Dorsolateral prefrontal cortex (tissue), 120 donors: ENCODE measurements at regions of chr10 and their contacts with region 1.

Region 1: DNA sequence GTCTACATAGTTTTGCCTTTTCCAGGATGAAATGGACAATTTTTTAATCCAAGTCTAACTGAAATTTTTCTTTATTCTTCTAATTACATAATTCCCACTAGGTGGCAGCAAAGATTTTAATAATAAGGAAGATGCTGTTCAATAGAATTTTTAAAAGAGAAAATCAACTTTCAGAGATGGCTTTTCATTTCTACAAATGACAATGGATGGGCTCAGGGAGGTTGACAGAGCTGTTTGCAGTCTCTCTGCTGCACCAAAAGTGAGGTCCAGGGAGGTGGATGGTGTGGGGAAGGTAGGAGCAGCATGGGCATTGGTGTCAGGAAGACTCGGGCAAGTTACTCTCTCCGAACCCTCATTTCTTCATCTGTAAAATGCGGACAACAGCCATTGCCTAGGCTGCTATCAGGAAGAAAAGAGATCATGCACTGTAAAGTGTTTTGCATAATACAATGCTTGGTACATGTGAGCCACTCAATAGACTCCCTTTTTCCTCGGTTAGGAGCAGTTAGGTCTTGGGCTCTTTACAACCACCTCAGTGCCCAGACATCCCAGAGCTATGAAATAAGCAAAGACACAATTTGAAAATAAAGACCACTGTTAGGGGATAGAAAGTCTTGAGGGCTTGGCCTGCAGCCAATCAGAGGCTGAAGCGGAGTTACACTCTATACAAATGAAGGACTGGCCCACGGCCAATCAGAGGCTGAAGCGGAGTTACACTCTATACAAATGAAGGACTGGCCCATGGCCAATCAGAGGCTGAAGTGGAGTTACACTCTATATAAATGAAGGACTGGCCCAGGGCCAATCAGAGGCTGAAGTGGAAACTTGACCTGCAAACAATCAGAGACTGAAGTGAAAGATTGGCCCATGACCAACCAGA is 107.1 kb downstream of the ABLIM1 start:
- DNase-seq: no peak
- H3K4me3 ChIP-seq: peak overlapping the region in 45 of 59 donors; percentile 2 to 60 (median 33)
- H3K27ac ChIP-seq: peak overlapping the region in 48 of 59 donors; percentile 1 to 79 (median 58)
- H3K27me3 ChIP-seq: peaks cover 0 to 2% (median 0%) of the 10 kb centered on the region in 45 donors
- CTCF ChIP-seq: peak; percentile 54 to 85 (median 68)

Region 2: DNA sequence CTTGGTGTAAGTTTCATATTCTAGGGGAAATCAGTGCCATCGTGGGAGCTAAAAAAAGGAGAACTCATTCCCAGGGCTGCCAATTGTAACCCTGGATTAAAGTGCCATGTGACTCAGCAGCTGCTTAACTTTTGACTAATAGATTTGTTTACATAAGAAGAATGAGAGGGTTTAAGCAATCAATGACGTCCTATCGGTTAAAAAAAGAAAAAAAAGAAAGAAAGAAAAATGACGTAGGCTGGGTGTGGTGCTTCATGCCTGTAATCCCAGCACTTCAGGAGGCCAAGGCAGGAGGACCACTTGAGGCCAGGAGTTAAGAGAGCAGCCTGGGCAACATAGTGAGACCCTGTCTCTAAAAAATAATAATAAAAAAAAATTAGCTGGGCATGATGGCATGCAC is 30.5 kb before region 1 on chr10:
- intact Hi-C with region 1: no loop called
- DNase-seq: no peak
- H3K4me3 ChIP-seq: no peak overlapping the region
- H3K27ac ChIP-seq: peak overlapping the region in 29 of 59 donors; percentile 2 to 81 (median 36)
- H3K27me3 ChIP-seq: peaks cover 0 to 8% (median 0%) of the 10 kb centered on the region in 45 donors
- CTCF ChIP-seq: no peak

Region 3: DNA sequence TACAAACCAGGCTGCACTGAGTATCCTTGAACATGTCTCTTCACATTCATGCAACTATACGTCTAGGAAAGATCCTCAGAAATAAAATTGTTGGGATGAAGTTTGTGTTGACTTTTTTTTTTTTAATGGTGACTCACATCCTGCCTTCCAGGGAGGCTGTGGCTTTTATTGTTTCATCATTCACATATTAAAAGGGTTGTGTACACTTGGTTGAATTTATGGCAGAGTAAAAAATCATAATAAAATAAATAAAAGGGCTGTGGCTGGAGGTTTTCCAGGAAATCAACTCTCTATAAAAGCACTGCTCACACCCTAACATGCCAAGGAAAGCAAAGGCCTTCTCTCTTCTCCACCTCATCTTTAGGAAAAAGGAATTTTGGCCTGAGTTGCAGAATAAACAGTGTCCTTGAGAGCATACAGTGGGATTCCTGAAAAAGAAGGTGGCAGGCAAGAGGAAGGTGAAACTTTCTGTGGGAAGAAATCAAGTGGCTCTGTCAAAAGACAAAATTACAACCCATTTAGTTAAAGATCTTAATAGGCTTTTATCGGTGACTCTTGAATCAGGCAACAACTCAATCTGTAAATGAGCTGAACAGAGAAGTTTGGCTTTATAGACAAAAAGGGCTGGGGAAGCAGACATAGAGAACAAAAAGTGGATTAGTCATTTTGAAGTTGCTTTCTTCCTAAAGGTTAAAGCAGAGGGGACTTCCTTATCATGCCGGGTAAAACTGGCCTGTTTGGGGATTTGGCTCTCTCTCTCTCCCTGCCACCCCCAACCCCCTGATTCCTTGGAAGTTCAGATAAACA is 229.0 kb after region 1 on chr10:
- intact Hi-C with region 1: loop called (anchors 2 to 5 kb)
- DNase-seq: no peak
- H3K4me3 ChIP-seq: no peak overlapping the region
- H3K27ac ChIP-seq: no peak overlapping the region
- H3K27me3 ChIP-seq: peaks cover 0 to 6% (median 0%) of the 10 kb centered on the region in 45 donors
- CTCF ChIP-seq: no peak

Region 4: GRCh38 chr10:114876602-114877300 is 325.8 kb after region 1 on chr10:
- intact Hi-C with region 1: loop called in 1 of 2 experiments (anchors 5 kb)
- DNase-seq: peak; percentile 9 to 80 (median 72)
- H3K4me3 ChIP-seq: peak overlapping the region in 9 of 59 donors; percentile 2 to 39 (median 22)
- H3K27ac ChIP-seq: peak overlapping the region in 2 of 59 donors; percentile 9 to 29
- H3K27me3 ChIP-seq: no peaks in the 10 kb centered on the region
- CTCF ChIP-seq: peak in 55 of 56 donors; percentile 12 to 83 (median 71)

Region 5: GRCh38 chr10:115129752-115130151 is 578.8 kb after region 1 on chr10:
- intact Hi-C with region 1: loop called in 1 of 2 experiments (anchors 5 kb)
- DNase-seq: no peak
- H3K4me3 ChIP-seq: no peak overlapping the region
- H3K27ac ChIP-seq: no peak overlapping the region
- H3K27me3 ChIP-seq: no peaks in the 10 kb centered on the region
- CTCF ChIP-seq: peak; percentile 14 to 83 (median 58)